ENCODE measurements at regions of chr2 and their contacts with region 1.

Region 1: DNA sequence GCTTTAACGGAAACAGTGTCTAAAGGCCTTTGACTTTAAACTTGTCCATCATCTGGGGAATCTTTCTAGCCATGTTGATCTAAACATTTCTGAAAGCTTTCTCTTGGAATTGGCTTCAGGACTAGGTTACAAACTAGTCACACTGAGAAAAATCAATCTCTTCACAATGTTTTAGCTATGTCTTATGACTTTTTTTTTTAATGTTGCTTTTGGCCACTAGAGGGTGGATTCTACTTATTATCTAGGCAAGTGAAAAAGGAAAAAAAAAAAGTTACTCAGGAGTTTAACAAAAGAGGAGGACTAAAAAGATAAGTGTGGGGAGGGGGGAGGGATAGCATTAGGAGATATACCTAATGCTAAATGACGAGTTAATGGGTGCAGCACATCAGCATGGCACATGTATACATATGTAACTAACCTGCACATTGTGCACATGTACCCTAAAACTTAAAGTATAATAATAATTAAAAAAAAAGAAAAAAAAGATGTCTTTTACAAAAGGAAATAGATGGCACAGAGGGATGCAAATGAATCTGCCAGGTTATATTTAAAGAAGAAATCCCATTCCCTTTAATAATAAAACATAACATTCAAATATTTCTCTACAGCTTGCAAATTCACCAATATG is 160.4 kb upstream of the PID1 start:
- DNase-seq: no peak
- ATAC-seq: no peak
- H3K4me3 ChIP-seq: no peak overlapping the region
- H3K27ac ChIP-seq: no peak overlapping the region
- H3K4me1 ChIP-seq: no peaks in the 10 kb centered on the region
- H3K27me3 ChIP-seq: no peaks in the 10 kb centered on the region
- CTCF ChIP-seq: peak; percentile 25

Region 2: GRCh38 chr2:229408356-229408755 is 23.1 kb before region 1 on chr2:
- intact Hi-C with region 1: loop called in 1 of 2 experiments (anchors 1 kb)
- DNase-seq: peak in 1 of 2 donors; percentile 39
- ATAC-seq: peak in 2 of 4 donors; percentile 59 to 82
- H3K4me3 ChIP-seq: no peak overlapping the region
- H3K27ac ChIP-seq: peak overlapping the region; percentile 37
- H3K4me1 ChIP-seq: no peaks in the 10 kb centered on the region
- H3K27me3 ChIP-seq: no peaks in the 10 kb centered on the region
- CTCF ChIP-seq: no peak

Region 3: GRCh38 chr2:229586746-229587705 is 155.6 kb after region 1 on chr2:
- intact Hi-C with region 1: loop called (anchors 2 to 5 kb)
- DNase-seq: peak; percentile 76 to 82
- ATAC-seq: peak in 3 of 4 donors; percentile 61 to 88 (median 86)
- H3K4me3 ChIP-seq: peak overlapping the region; percentile 30
- H3K27ac ChIP-seq: no peak overlapping the region
- H3K4me1 ChIP-seq: no peaks in the 10 kb centered on the region
- H3K27me3 ChIP-seq: no peaks in the 10 kb centered on the region
- CTCF ChIP-seq: peak; percentile 54

Measured in psoas muscle (tissue), 8 donors.